ENCODE measurements at regions of chr4 and their contacts with region 1.

Region 1: GRCh38 chr4:165131247-165131832 is 18.7 kb upstream of the TMEM192 start:
- DNase-seq: peak; percentile 86
- ATAC-seq: peak; percentile 87
- H3K4me3 Mint-ChIP-seq: no peak overlapping the region
- H3K27ac Mint-ChIP-seq: no peak overlapping the region
- H3K4me1 Mint-ChIP-seq: no peaks in the 10 kb centered on the region
- H3K27me3 Mint-ChIP-seq: no peaks in the 10 kb centered on the region
- CTCF ChIP-seq: peak; percentile 87

Region 2: GRCh38 chr4:165118256-165118909 is 13.0 kb before region 1 on chr4:
- CTCF ChIA-PET with region 1: interaction called, 33 read pairs
- POLR2A ChIA-PET with region 1: no interaction called
- DNase-seq: no peak
- ATAC-seq: no peak
- H3K4me3 Mint-ChIP-seq: no peak overlapping the region
- H3K27ac Mint-ChIP-seq: no peak overlapping the region
- H3K4me1 Mint-ChIP-seq: peaks cover 5% of the 10 kb centered on the region
- H3K27me3 Mint-ChIP-seq: peaks cover 3% of the 10 kb centered on the region; the same call in 1 of the 2 replicates
- CTCF ChIP-seq: no peak

Region 3: DNA sequence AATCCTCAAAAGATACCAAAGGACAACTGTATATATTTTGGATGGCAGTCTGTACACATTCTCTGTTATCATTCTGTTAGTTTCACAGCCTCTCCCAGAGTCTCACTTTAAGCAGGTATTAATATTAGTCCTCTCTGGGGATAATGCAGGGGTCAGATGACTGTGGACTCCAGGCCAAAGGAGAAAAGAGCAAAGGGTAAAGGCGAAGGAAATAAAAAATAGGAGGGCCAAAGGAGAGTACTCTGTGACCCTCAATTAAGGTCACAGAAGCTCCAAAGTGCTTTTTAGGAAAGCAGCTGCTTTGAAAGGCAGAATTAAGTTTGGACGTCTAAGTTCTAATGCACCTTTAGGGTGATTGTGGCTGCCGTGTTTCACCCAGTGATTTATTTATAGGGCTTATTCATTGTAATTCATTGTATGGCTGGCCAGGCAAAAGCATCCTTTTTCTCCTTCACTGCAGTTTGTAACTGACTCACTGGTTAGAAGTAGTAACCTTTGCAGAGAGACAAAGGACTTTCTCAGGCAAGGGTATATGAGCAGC is 203.9 kb after region 1 on chr4:
- CTCF ChIA-PET with region 1: interaction called, 11 read pairs
- POLR2A ChIA-PET with region 1: no interaction called
- DNase-seq: no peak
- ATAC-seq: no peak
- H3K4me3 Mint-ChIP-seq: no peak overlapping the region; the same call in 1 of the 2 replicates
- H3K27ac Mint-ChIP-seq: peak overlapping the region; percentile 80
- H3K4me1 Mint-ChIP-seq: peaks cover 49% of the 10 kb centered on the region
- H3K27me3 Mint-ChIP-seq: no peaks in the 10 kb centered on the region
- CTCF ChIP-seq: no peak

Region 4: DNA sequence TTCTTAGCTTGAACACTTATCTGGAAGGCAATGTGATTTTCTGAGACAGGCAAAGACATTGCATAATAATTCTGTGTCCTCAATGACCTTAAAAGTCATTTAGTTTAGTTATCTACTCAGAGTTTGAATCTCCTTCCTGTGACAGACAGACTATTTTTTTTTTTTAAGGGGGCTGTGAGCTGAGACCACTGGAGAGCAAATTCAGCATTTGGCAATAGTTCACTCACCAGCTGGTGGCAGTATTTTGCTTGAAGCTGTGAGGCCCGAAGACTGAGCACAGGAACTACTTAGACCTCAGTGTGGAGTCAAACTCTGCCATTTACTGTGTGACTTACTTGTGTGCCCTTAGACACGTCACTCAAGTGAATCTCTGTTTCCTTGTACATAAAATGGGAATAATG is 224.6 kb after region 1 on chr4:
- CTCF ChIA-PET with region 1: interaction called, 17 read pairs
- POLR2A ChIA-PET with region 1: no interaction called
- DNase-seq: peak; percentile 63
- ATAC-seq: peak; percentile 87
- H3K4me3 Mint-ChIP-seq: no peak overlapping the region
- H3K27ac Mint-ChIP-seq: no peak overlapping the region
- H3K4me1 Mint-ChIP-seq: 0 out of 2 replicates have a peak, but pooled peaks cover 2% of the 10 kb centered on the region
- H3K27me3 Mint-ChIP-seq: no peaks in the 10 kb centered on the region
- CTCF ChIP-seq: no peak

Region 5: GRCh38 chr4:165370530-165370929 is 239.2 kb after region 1 on chr4:
- CTCF ChIA-PET with region 1: no interaction called
- POLR2A ChIA-PET with region 1: no interaction called
- DNase-seq: no peak
- ATAC-seq: no peak
- H3K4me3 Mint-ChIP-seq: no peak overlapping the region
- H3K27ac Mint-ChIP-seq: no peak overlapping the region
- H3K4me1 Mint-ChIP-seq: peaks cover 16% of the 10 kb centered on the region
- H3K27me3 Mint-ChIP-seq: no peaks in the 10 kb centered on the region
- CTCF ChIP-seq: no peak

Measured in WTC11 (cell line).